B cell (primary cell): ENCODE measurements at regions of chr22 and their contacts with region 1.

Region 1: GRCh38 chr22:41468381-41469217 is at the starts of genes ACO2 and PHF5A:
- DNase-seq: peak; percentile 99
- ATAC-seq: peak; percentile 91
- H3K4me3 ChIP-seq: peak within 1 kb of the TSS; percentile 71 to 98 (median 86)
- H3K4me3 Mint-ChIP-seq: peak within 1 kb of the TSS; percentile 89
- H3K27ac ChIP-seq: peak within 1 kb of the TSS; percentile 99
- H3K27ac Mint-ChIP-seq: peak within 1 kb of the TSS; percentile 98
- H3K4me1 ChIP-seq: peaks cover 20 to 31% of the 10 kb centered on the region in 2 donors
- H3K4me1 Mint-ChIP-seq: peaks cover 59% of the 10 kb centered on the region
- H3K27me3 ChIP-seq: no peaks in the 10 kb centered on the region
- H3K27me3 Mint-ChIP-seq: no peaks in the 10 kb centered on the region
- CTCF ChIP-seq: no peak
- total RNA-seq, gene ACO2: 91.7 and 104 TPM in 2 replicates
- total RNA-seq, gene PHF5A: 31.6 and 34.5 TPM in 2 replicates

Region 2: DNA sequence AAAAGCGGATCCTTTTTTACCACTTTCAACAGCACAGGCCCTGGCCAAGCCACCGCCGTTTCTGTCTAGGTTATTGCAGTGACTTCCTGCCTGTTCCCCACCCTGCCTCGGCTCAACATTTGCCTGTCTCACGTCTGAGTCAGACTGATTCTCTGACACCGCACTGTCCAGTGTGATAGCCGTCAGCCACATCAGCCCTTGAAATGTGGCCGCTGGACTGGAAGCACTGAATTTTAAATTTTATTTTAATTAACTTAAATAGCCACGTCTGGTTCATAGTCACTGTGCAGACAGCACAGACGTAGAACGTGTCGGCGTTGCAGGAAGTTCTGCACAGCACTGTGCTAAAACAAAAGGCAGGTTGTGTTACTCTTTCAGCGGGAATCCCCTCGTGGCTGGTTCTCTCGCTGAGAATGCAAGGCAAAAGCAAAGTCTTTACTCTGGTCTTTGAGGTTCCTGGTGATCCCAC is 1178.6 kb before region 1 on chr22:
- CTCF ChIA-PET with region 1: no interaction called
- POLR2A ChIA-PET with region 1: interaction called, 10 read pairs
- intact Hi-C with region 1: no loop called
- DNase-seq: peak; percentile 39
- ATAC-seq: peak; percentile 77
- H3K4me3 ChIP-seq: no peak overlapping the region
- H3K4me3 Mint-ChIP-seq: peak overlapping the region; percentile 38
- H3K27ac ChIP-seq: peak overlapping the region; percentile 11 to 67
- H3K27ac Mint-ChIP-seq: peak overlapping the region; percentile 81
- H3K4me1 ChIP-seq: peaks cover 0 to 14% of the 10 kb centered on the region in 2 donors
- H3K4me1 Mint-ChIP-seq: peaks cover 13% of the 10 kb centered on the region
- H3K27me3 ChIP-seq: no peaks in the 10 kb centered on the region
- H3K27me3 Mint-ChIP-seq: no peaks in the 10 kb centered on the region
- CTCF ChIP-seq: no peak

Region 3: GRCh38 chr22:41479671-41480396 is 11.2 kb after region 1 on chr22:
- CTCF ChIA-PET with region 1: interaction called, 20 read pairs
- POLR2A ChIA-PET with region 1: interaction called, 45 read pairs
- intact Hi-C with region 1: loop called (anchors 1 kb)
- DNase-seq: no peak
- ATAC-seq: no peak
- H3K4me3 ChIP-seq: peak overlapping the region in 4 of 5 experiments; percentile 0 to 25 (median 12)
- H3K4me3 Mint-ChIP-seq: peak overlapping the region; percentile 76
- H3K27ac ChIP-seq: peak overlapping the region; percentile 82 to 86
- H3K27ac Mint-ChIP-seq: peak overlapping the region; percentile 95
- H3K4me1 ChIP-seq: peaks cover 84 to 95% of the 10 kb centered on the region in 2 donors
- H3K4me1 Mint-ChIP-seq: peaks cover 77% of the 10 kb centered on the region
- H3K27me3 ChIP-seq: no peaks in the 10 kb centered on the region
- H3K27me3 Mint-ChIP-seq: no peaks in the 10 kb centered on the region
- CTCF ChIP-seq: no peak

Region 4: GRCh38 chr22:41621099-41621910 is 152.7 kb after region 1 on chr22 and contains the start of gene XRCC6:
- CTCF ChIA-PET with region 1: no interaction called
- POLR2A ChIA-PET with region 1: no interaction called
- intact Hi-C with region 1: loop called (anchors 2 kb)
- DNase-seq: peak; percentile 100
- ATAC-seq: peak; percentile 96
- H3K4me3 ChIP-seq: peak within 1 kb of the TSS; percentile 68 to 97 (median 89)
- H3K4me3 Mint-ChIP-seq: peak within 1 kb of the TSS; percentile 96
- H3K27ac ChIP-seq: peak within 1 kb of the TSS; percentile 95 to 96
- H3K27ac Mint-ChIP-seq: peak within 1 kb of the TSS; percentile 94
- H3K4me1 ChIP-seq: peaks cover 19 to 27% of the 10 kb centered on the region in 2 donors
- H3K4me1 Mint-ChIP-seq: peaks cover 39% of the 10 kb centered on the region
- H3K27me3 ChIP-seq: no peaks in the 10 kb centered on the region
- H3K27me3 Mint-ChIP-seq: no peaks in the 10 kb centered on the region
- CTCF ChIP-seq: no peak
- total RNA-seq, gene XRCC6: 176 and 180 TPM in 2 replicates

Region 5: DNA sequence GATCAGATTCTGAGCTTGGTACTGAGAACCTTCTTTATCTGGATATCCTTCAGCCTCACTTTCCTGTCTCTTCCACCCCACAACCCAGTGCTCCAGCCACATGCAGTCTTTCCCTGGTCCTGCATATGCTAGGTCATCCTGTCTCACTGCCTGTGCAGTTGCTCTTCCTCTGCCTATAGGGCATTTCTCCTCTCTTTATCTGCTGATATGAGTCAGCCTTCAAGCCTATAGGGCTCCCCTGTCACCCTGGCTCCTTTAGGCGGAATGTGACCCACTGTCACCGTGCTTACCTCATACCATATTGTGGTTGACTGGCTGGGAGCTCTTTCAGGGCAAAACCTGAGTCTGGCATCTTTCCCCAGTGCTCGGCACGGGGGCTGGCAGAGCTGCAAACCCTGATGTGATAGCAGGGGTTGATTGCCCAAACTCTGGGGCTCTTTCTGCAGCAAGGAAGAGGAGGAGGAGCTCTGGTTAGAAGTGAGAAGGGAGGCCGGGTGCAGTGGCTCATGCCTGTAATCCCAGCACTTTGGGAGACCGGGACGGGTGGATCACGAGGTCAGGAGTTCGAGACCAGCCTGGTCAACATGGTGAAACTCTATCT is 257.0 kb after region 1 on chr22:
- CTCF ChIA-PET with region 1: no interaction called
- POLR2A ChIA-PET with region 1: no interaction called
- intact Hi-C with region 1: no loop called
- DNase-seq: no peak
- ATAC-seq: no peak
- H3K4me3 ChIP-seq: no peak overlapping the region
- H3K4me3 Mint-ChIP-seq: no peak overlapping the region
- H3K27ac ChIP-seq: no peak overlapping the region
- H3K27ac Mint-ChIP-seq: no peak overlapping the region
- H3K4me1 ChIP-seq: no peaks in the 10 kb centered on the region
- H3K4me1 Mint-ChIP-seq: no peaks in the 10 kb centered on the region
- H3K27me3 ChIP-seq: no peaks in the 10 kb centered on the region
- H3K27me3 Mint-ChIP-seq: no peaks in the 10 kb centered on the region
- CTCF ChIP-seq: no peak